ENCODE measurements at regions of chr17 and their contacts with region 1.

Region 1: DNA sequence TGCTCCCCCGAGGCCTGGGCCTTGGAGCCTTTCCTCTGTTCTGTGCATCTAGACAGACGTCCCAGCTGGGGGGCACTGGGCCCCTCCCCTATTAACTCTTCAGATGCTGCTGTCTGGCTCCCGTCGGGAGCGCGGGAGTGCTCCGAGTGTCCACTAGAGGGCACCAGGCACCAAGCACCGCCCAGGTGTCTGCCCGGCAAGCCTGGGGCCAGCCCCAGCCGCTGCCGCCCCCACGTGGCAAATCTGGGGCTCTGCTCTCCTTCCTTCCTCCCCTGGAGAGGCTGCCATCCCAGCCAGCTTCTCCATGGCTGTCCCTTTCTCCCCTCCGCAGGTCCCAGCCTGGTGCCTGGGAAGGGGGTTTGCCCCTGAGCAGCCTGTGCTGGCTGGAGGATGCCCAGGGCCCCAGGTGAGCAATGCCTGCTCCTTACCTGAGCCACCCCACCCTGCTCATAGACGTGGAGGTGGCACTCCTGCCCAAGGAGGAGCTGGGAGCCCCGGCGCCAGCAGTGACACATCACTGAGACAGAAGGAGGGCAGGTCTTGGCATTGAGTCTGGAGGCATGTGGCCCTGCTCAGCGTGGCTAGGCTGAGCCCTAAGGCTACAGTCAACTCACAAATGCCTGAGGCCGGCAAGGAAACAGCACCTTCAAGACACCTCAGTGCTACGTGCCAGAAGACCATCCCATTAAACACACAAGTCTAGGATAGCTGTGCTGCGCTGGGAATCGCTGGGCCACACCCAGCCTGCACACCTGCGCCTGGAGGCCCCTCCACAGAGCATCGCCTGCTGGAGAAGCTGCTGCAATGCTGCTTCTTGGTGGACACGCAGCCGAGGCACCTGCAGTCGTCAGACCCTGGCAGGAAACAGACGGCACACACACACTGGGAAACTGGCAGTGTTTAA is 19.7 kb downstream of the TMEM235 start:
- DNase-seq: peak; percentile 70 to 88 (median 82)
- ATAC-seq: peak; percentile 73
- H3K4me3 ChIP-seq: peak overlapping the region; percentile 73
- H3K4me3 Mint-ChIP-seq: peak overlapping the region; percentile 82 to 96 (median 92)
- H3K27ac ChIP-seq: peak overlapping the region; percentile 87
- H3K27ac Mint-ChIP-seq: peak overlapping the region; percentile 91 to 100 (median 98)
- H3K4me1 ChIP-seq: peaks cover 37 to 48% of the 10 kb centered on the region in 2 donors
- H3K4me1 Mint-ChIP-seq: peaks cover 24 to 57% (median 47%) of the 10 kb centered on the region in 7 donors
- H3K27me3 ChIP-seq: no peaks in the 10 kb centered on the region
- H3K27me3 Mint-ChIP-seq: peaks cover 0 to 4% (median 0%) of the 10 kb centered on the region in 5 donors

Region 2: DNA sequence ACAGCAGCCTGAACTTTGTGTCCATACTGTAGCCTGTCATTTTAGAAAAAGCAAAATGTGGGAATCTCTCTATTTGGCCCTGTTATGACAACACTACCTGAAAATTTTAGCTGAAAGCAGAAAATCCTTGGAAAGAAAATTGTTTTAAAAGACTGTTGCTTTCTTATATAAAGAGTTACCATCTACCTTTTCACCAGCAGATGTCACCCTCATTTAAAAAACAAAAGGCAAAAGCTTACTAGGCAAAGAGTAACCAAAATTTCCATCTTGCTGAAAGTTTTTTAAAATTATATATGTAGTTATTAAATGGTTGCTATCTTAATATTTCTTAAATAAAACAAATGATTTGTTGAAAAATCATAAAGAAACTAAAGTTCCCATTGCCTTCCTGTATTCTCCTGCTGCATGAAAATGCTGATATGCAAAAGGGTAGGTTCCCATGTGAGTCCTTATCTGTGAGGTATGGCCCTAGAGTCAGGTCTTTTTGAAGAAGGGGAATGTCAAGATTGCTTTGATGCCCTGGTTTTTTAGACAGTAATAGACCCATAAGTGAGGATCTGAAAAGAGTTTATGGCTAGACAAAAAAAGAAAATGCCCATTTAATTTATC is 231.7 kb before region 1 on chr17:
- CTCF ChIA-PET with region 1: no interaction called
- POLR2A ChIA-PET with region 1: no interaction called
- intact Hi-C with region 1: loop called in 1 of 2 experiments (anchors 1 kb)
- DNase-seq: peak in 5 of 9 donors; percentile 20 to 37 (median 26)
- ATAC-seq: no peak
- H3K4me3 ChIP-seq: no peak overlapping the region
- H3K4me3 Mint-ChIP-seq: peak overlapping the region in 2 of 10 donors; percentile 7 to 37
- H3K27ac ChIP-seq: no peak overlapping the region
- H3K27ac Mint-ChIP-seq: peak overlapping the region in 6 of 9 donors; percentile 1 to 89 (median 38)
- H3K4me1 ChIP-seq: peaks cover 11 to 15% of the 10 kb centered on the region in 2 donors
- H3K4me1 Mint-ChIP-seq: peaks cover 14 to 45% (median 28%) of the 10 kb centered on the region in 7 donors
- H3K27me3 ChIP-seq: no peaks in the 10 kb centered on the region
- H3K27me3 Mint-ChIP-seq: no peaks in the 10 kb centered on the region

Region 3: GRCh38 chr17:78128551-78129350 is 122.4 kb before region 1 on chr17 and contains the start of gene TMC6:
- CTCF ChIA-PET with region 1: interaction called, 6 read pairs
- POLR2A ChIA-PET with region 1: interaction called, 23 read pairs
- intact Hi-C with region 1: loop called (anchors 5 kb)
- DNase-seq: peak in 8 of 9 donors; percentile 76 to 88 (median 82)
- ATAC-seq: peak; percentile 45
- H3K4me3 ChIP-seq: peak within 1 kb of the TSS; percentile 95
- H3K4me3 Mint-ChIP-seq: peak within 1 kb of the TSS; percentile 89 to 100 (median 99)
- H3K27ac ChIP-seq: peak within 1 kb of the TSS; percentile 77
- H3K27ac Mint-ChIP-seq: peak within 1 kb of the TSS; percentile 95 to 99 (median 97)
- H3K4me1 ChIP-seq: peaks cover 56 to 59% of the 10 kb centered on the region in 2 donors
- H3K4me1 Mint-ChIP-seq: peaks cover 19 to 53% (median 39%) of the 10 kb centered on the region in 7 donors
- H3K27me3 ChIP-seq: no peaks in the 10 kb centered on the region
- H3K27me3 Mint-ChIP-seq: peaks cover 0 to 3% (median 0%) of the 10 kb centered on the region in 5 donors
- total RNA-seq, gene TMC6: 574 to 808 (median 773) TPM

Region 4: DNA sequence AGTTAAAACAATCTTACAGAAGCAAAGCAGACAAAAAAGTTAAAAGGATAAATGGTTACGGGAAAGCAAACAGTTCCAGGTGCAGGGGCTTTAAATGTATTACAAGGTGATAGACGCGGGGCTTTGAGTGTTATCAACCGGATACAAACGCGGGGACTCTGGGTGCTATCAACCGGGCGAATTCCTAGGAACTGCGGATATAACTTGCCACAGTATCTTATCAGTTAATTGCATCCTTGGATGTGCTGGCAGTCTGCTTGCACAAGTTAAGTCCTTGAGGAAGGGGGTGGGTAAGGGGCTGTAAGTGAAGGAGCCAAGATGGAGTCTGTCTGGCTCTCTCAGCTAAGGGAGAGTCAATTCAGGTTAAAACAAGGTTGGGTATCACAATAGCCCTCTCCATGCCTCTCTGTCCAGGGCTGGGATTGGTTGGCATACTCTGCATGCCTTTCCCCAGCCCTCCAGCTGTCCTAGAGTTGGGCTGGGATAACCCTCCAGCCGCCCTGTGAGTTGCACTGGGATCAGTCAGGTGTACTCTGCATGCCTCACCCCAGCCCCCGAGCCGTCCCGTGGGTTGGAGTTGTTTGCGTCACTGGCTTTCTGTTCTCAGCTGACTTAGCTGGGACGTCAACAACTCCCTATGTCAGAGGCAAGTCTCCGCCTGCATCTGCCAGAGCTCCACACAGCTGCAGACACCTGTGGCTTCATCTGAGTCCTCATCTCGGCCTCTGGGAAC is 21.2 kb after region 1 on chr17:
- CTCF ChIA-PET with region 1: interaction called, 13 read pairs
- POLR2A ChIA-PET with region 1: interaction called, 26 read pairs
- intact Hi-C with region 1: loop called in 1 of 2 experiments (anchors 1 kb)
- DNase-seq: peak in 8 of 9 donors; percentile 50 to 93 (median 86)
- ATAC-seq: peak; percentile 93
- H3K4me3 ChIP-seq: no peak overlapping the region
- H3K4me3 Mint-ChIP-seq: peak overlapping the region; percentile 33 to 80 (median 72)
- H3K27ac ChIP-seq: peak overlapping the region; percentile 71
- H3K27ac Mint-ChIP-seq: peak overlapping the region; percentile 66 to 99 (median 94)
- H3K4me1 ChIP-seq: peaks cover 0 to 37% of the 10 kb centered on the region in 2 donors
- H3K4me1 Mint-ChIP-seq: peaks cover 20 to 61% (median 44%) of the 10 kb centered on the region in 7 donors
- H3K27me3 ChIP-seq: no peaks in the 10 kb centered on the region
- H3K27me3 Mint-ChIP-seq: peaks cover 0 to 5% (median 0%) of the 10 kb centered on the region in 5 donors

Region 5: GRCh38 chr17:78341559-78342448 is 90.7 kb after region 1 on chr17:
- CTCF ChIA-PET with region 1: interaction called, 3 read pairs
- POLR2A ChIA-PET with region 1: interaction called, 4 read pairs
- intact Hi-C with region 1: loop called in 1 of 2 experiments (anchors 5 kb)
- DNase-seq: peak in 2 of 9 donors; percentile 28 to 48
- ATAC-seq: peak; percentile 15
- H3K4me3 ChIP-seq: peak overlapping the region; percentile 24
- H3K4me3 Mint-ChIP-seq: peak overlapping the region in 8 of 10 donors; percentile 53 to 85 (median 72)
- H3K27ac ChIP-seq: peak overlapping the region; percentile 82
- H3K27ac Mint-ChIP-seq: peak overlapping the region in 5 of 9 donors; percentile 32 to 98 (median 97)
- H3K4me1 ChIP-seq: peaks cover 43 to 67% of the 10 kb centered on the region in 2 donors
- H3K4me1 Mint-ChIP-seq: peaks cover 54 to 75% (median 62%) of the 10 kb centered on the region in 7 donors
- H3K27me3 ChIP-seq: no peaks in the 10 kb centered on the region
- H3K27me3 Mint-ChIP-seq: peaks cover 0 to 15% (median 0%) of the 10 kb centered on the region in 5 donors

Region 6: GRCh38 chr17:78415821-78416711 is 164.9 kb after region 1 on chr17:
- CTCF ChIA-PET with region 1: interaction called, 50 read pairs
- POLR2A ChIA-PET with region 1: interaction called, 3 read pairs
- intact Hi-C with region 1: loop called in 1 of 2 experiments (anchors 2 kb)
- DNase-seq: no peak
- ATAC-seq: no peak
- H3K4me3 ChIP-seq: no peak overlapping the region
- H3K4me3 Mint-ChIP-seq: peak overlapping the region in 4 of 10 donors; percentile 38 to 84 (median 75)
- H3K27ac ChIP-seq: peak overlapping the region; percentile 75
- H3K27ac Mint-ChIP-seq: peak overlapping the region; percentile 16 to 97 (median 91)
- H3K4me1 ChIP-seq: peaks cover 24 to 41% of the 10 kb centered on the region in 2 donors
- H3K4me1 Mint-ChIP-seq: peaks cover 49 to 83% (median 55%) of the 10 kb centered on the region in 7 donors
- H3K27me3 ChIP-seq: no peaks in the 10 kb centered on the region
- H3K27me3 Mint-ChIP-seq: no peaks in the 10 kb centered on the region

Region 7: GRCh38 chr17:80035943-80036714 is 1785.0 kb after region 1 on chr17 and contains the start of gene CCDC40:
- CTCF ChIA-PET with region 1: no interaction called
- POLR2A ChIA-PET with region 1: no interaction called
- intact Hi-C with region 1: loop called in 1 of 2 experiments (anchors 10 kb)
- DNase-seq: peak; percentile 66 to 85 (median 78)
- ATAC-seq: peak; percentile 91
- H3K4me3 ChIP-seq: peak within 1 kb of the TSS; percentile 81
- H3K4me3 Mint-ChIP-seq: peak within 1 kb of the TSS; percentile 78 to 94 (median 85)
- H3K27ac ChIP-seq: peak within 1 kb of the TSS; percentile 76
- H3K27ac Mint-ChIP-seq: peak within 1 kb of the TSS; percentile 60 to 96 (median 84)
- H3K4me1 ChIP-seq: peaks cover 4 to 6% of the 10 kb centered on the region in 2 donors
- H3K4me1 Mint-ChIP-seq: peaks cover 5 to 18% (median 9%) of the 10 kb centered on the region in 7 donors
- H3K27me3 ChIP-seq: peaks cover 0 to 3% of the 10 kb centered on the region in 2 donors
- H3K27me3 Mint-ChIP-seq: peaks cover 0 to 63% (median 10%) of the 10 kb centered on the region in 5 donors
- total RNA-seq, gene CCDC40: 0.43 to 3.0 (median 0.79) TPM